ENCODE measurements at regions of chr1 and their contacts with region 1.

Region 1: GRCh38 chr1:11838349-11839272 is 9.0 kb downstream of the NPPA start:
- DNase-seq: peak; percentile 93
- H3K4me3 Mint-ChIP-seq: no peak overlapping the region
- H3K27ac Mint-ChIP-seq: no peak overlapping the region
- H3K4me1 Mint-ChIP-seq: peaks cover 5% of the 10 kb centered on the region
- H3K27me3 Mint-ChIP-seq: no peaks in the 10 kb centered on the region

Region 2: DNA sequence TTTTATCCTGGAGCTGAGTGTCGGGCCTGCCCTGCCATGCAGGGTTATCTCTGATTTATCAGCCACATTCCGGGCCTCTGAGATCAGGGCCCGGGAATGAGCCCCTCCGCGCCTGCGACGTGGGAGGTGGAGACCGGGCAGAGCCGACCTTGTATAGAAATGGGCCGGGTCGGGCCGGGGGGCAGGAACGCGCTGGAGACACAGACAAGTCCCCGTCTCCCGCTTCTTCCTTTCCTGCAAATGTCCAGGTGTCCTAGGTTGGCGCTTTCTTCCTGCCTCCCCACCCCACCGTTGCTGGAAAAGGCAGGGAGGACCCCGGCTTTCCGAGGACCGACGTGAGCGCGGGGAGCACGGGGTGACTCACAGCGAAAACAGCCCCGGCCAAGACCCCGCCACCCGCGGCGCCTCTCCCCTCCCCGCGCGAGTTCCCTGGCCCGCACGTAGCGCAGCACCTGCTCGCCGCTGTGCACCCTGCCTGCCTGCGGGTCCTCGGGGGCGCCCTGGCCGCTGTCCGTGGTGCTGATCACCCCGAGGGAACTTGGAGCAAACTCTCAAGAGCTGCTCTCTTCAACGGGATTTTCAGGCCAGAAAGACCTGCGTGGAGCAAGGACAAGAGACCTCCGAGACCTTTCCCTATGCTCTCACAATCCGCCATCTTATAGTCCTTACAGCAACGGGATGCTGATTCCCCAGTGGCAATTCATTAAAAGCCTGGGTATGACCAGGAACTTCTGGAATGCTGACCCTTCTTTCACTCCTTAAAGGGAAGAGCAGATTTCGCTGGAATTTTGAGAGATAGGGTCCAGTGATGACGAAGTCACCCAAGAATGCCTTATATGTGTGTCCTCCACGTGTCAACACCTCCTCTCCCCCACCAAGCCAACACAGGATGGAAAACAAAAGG is 20.6 kb after region 1 on chr1:
- intact Hi-C with region 1: no loop called
- DNase-seq: peak; percentile 92
- H3K4me3 Mint-ChIP-seq: no peak overlapping the region
- H3K27ac Mint-ChIP-seq: no peak overlapping the region
- H3K4me1 Mint-ChIP-seq: no peaks in the 10 kb centered on the region
- H3K27me3 Mint-ChIP-seq: peaks cover 47% of the 10 kb centered on the region

Region 3: GRCh38 chr1:11893907-11894251 is 55.3 kb after region 1 on chr1:
- intact Hi-C with region 1: loop called (anchors 1 kb)
- DNase-seq: peak; percentile 92
- H3K4me3 Mint-ChIP-seq: no peak overlapping the region
- H3K27ac Mint-ChIP-seq: peak overlapping the region; percentile 12
- H3K4me1 Mint-ChIP-seq: no peaks in the 10 kb centered on the region
- H3K27me3 Mint-ChIP-seq: peaks cover 30% of the 10 kb centered on the region

Measured in activated CD4-positive, alpha-beta T cell treated with anti-CD3 and anti-CD28 coated beads, Interleukin-2, amount 10 ng/mL, durations not matched to agents 24 days and 14 days (primary cell).